Naive thymus-derived CD4-positive, alpha-beta T cell (primary cell): ENCODE measurements at regions of chr17 and their contacts with region 1.

Region 1: GRCh38 chr17:39209317-39210092 is 9.4 kb downstream of the RPL19 start:
- DNase-seq: peak; percentile 49 to 83 (median 68)
- ATAC-seq: peak; percentile 80
- H3K4me3 ChIP-seq: peak overlapping the region; percentile 57
- H3K4me3 Mint-ChIP-seq: peak overlapping the region; percentile 16 to 80 (median 66)
- H3K27ac ChIP-seq: peak overlapping the region; percentile 19
- H3K27ac Mint-ChIP-seq: peak overlapping the region in 7 of 9 donors; percentile 25 to 93 (median 80)
- H3K4me1 ChIP-seq: peaks cover 14 to 23% of the 10 kb centered on the region in 2 donors
- H3K4me1 Mint-ChIP-seq: peaks cover 12 to 38% (median 29%) of the 10 kb centered on the region in 7 donors
- H3K27me3 ChIP-seq: no peaks in the 10 kb centered on the region
- H3K27me3 Mint-ChIP-seq: peaks cover 0 to 19% (median 0%) of the 10 kb centered on the region in 5 donors

Region 2: GRCh38 chr17:38885728-38886561 is 323.6 kb before region 1 on chr17:
- CTCF ChIA-PET with region 1: no interaction called
- POLR2A ChIA-PET with region 1: interaction called, 10 read pairs
- intact Hi-C with region 1: no loop called
- DNase-seq: peak in 1 of 9 donors; percentile 19
- ATAC-seq: no peak
- H3K4me3 ChIP-seq: no peak overlapping the region
- H3K4me3 Mint-ChIP-seq: peak overlapping the region; percentile 41 to 96 (median 76)
- H3K27ac ChIP-seq: peak overlapping the region; percentile 60
- H3K27ac Mint-ChIP-seq: peak overlapping the region; percentile 69 to 99 (median 91)
- H3K4me1 ChIP-seq: peaks cover 78 to 93% of the 10 kb centered on the region in 2 donors
- H3K4me1 Mint-ChIP-seq: peaks cover 68 to 97% (median 83%) of the 10 kb centered on the region in 7 donors
- H3K27me3 ChIP-seq: no peaks in the 10 kb centered on the region
- H3K27me3 Mint-ChIP-seq: no peaks in the 10 kb centered on the region

Region 3: GRCh38 chr17:39235555-39236449 is 26.3 kb after region 1 on chr17:
- CTCF ChIA-PET with region 1: interaction called, 285 read pairs
- POLR2A ChIA-PET with region 1: interaction called, 144 read pairs
- intact Hi-C with region 1: loop called (anchors 1 kb)
- DNase-seq: peak in 7 of 9 donors; percentile 35 to 62 (median 51)
- ATAC-seq: peak; percentile 57
- H3K4me3 ChIP-seq: no peak overlapping the region
- H3K4me3 Mint-ChIP-seq: peak overlapping the region in 4 of 10 donors; percentile 0 to 51 (median 8)
- H3K27ac ChIP-seq: no peak overlapping the region
- H3K27ac Mint-ChIP-seq: peak overlapping the region in 8 of 9 donors; percentile 21 to 89 (median 76)
- H3K4me1 ChIP-seq: peaks cover 33 to 43% of the 10 kb centered on the region in 2 donors
- H3K4me1 Mint-ChIP-seq: peaks cover 20 to 45% (median 40%) of the 10 kb centered on the region in 7 donors
- H3K27me3 ChIP-seq: no peaks in the 10 kb centered on the region
- H3K27me3 Mint-ChIP-seq: peaks cover 0 to 13% (median 9%) of the 10 kb centered on the region in 5 donors

Region 4: GRCh38 chr17:39244600-39245570 is 35.4 kb after region 1 on chr17:
- CTCF ChIA-PET with region 1: interaction called, 285 read pairs
- POLR2A ChIA-PET with region 1: interaction called, 144 read pairs
- intact Hi-C with region 1: loop called (anchors 1 kb)
- DNase-seq: peak; percentile 74 to 85 (median 81)
- ATAC-seq: peak; percentile 96
- H3K4me3 ChIP-seq: no peak overlapping the region
- H3K4me3 Mint-ChIP-seq: peak overlapping the region in 5 of 10 donors; percentile 12 to 61 (median 38)
- H3K27ac ChIP-seq: no peak overlapping the region
- H3K27ac Mint-ChIP-seq: peak overlapping the region in 6 of 9 donors; percentile 5 to 87 (median 66)
- H3K4me1 ChIP-seq: peaks cover 6 to 10% of the 10 kb centered on the region in 2 donors
- H3K4me1 Mint-ChIP-seq: peaks cover 7 to 16% (median 11%) of the 10 kb centered on the region in 7 donors
- H3K27me3 ChIP-seq: no peaks in the 10 kb centered on the region
- H3K27me3 Mint-ChIP-seq: peaks cover 0 to 4% (median 0%) of the 10 kb centered on the region in 5 donors

Region 5: GRCh38 chr17:39401412-39402243 is 192.1 kb after region 1 on chr17 and contains the start of gene FBXL20:
- CTCF ChIA-PET with region 1: no interaction called
- POLR2A ChIA-PET with region 1: no interaction called
- intact Hi-C with region 1: loop called in 1 of 2 experiments (anchors 1 kb)
- DNase-seq: peak; percentile 85 to 94 (median 91)
- ATAC-seq: peak; percentile 89
- H3K4me3 ChIP-seq: peak within 1 kb of the TSS; percentile 84
- H3K4me3 Mint-ChIP-seq: peak within 1 kb of the TSS; percentile 93 to 99 (median 98)
- H3K27ac ChIP-seq: peak within 1 kb of the TSS; percentile 90
- H3K27ac Mint-ChIP-seq: peak within 1 kb of the TSS; percentile 86 to 99 (median 96)
- H3K4me1 ChIP-seq: peaks cover 6 to 13% of the 10 kb centered on the region in 2 donors
- H3K4me1 Mint-ChIP-seq: peaks cover 18 to 56% (median 44%) of the 10 kb centered on the region in 7 donors
- H3K27me3 ChIP-seq: no peaks in the 10 kb centered on the region
- H3K27me3 Mint-ChIP-seq: no peaks in the 10 kb centered on the region
- total RNA-seq, gene FBXL20: 17.6 to 35.0 (median 26.1) TPM